Pancreas (tissue), 10 donors: ENCODE measurements at regions of chr1 and their contacts with region 1.

Region 1: GRCh38 chr1:54996359-54996868 is 2.3 kb upstream of the BSND start:
- DNase-seq: peak; percentile 58 to 96 (median 77)
- ATAC-seq: peak; percentile 92 to 95 (median 94)
- H3K4me3 ChIP-seq: peak overlapping the region in 1 of 4 donors; percentile 18
- H3K27ac ChIP-seq: no peak overlapping the region
- H3K4me1 ChIP-seq: peaks cover 0 to 4% (median 0%) of the 10 kb centered on the region in 3 donors
- H3K27me3 ChIP-seq: peaks cover 0 to 6% (median 0%) of the 10 kb centered on the region in 4 donors
- CTCF ChIP-seq: peak; percentile 63 to 88 (median 68)

Region 2: GRCh38 chr1:54810100-54810942 is 186.1 kb before region 1 on chr1:
- intact Hi-C with region 1: no loop called
- DNase-seq: peak in 5 of 6 donors; percentile 43 to 83 (median 68)
- ATAC-seq: peak; percentile 91 to 99 (median 97)
- H3K4me3 ChIP-seq: no peak overlapping the region
- H3K27ac ChIP-seq: no peak overlapping the region
- H3K4me1 ChIP-seq: no peaks in the 10 kb centered on the region
- H3K27me3 ChIP-seq: no peaks in the 10 kb centered on the region
- CTCF ChIP-seq: peak; percentile 28 to 70 (median 64)

Region 3: GRCh38 chr1:54944610-54945544 is 51.5 kb before region 1 on chr1:
- intact Hi-C with region 1: loop called in 2 of 3 experiments (anchors 2 to 5 kb)
- DNase-seq: peak in 5 of 6 donors; percentile 55 to 75 (median 68)
- ATAC-seq: peak; percentile 83 to 95 (median 94)
- H3K4me3 ChIP-seq: peak overlapping the region in 1 of 4 donors; percentile 22
- H3K27ac ChIP-seq: no peak overlapping the region
- H3K4me1 ChIP-seq: no peaks in the 10 kb centered on the region
- H3K27me3 ChIP-seq: no peaks in the 10 kb centered on the region
- CTCF ChIP-seq: peak; percentile 67 to 82 (median 72)